ENCODE measurements at regions of chr1 and their contacts with region 1.

Region 1: GRCh38 chr1:37890378-37891014 is 31.1 kb upstream of the MTF1 start:
- DNase-seq: no peak
- ATAC-seq: peak; percentile 28
- H3K4me3 Mint-ChIP-seq: no peak overlapping the region
- H3K27ac Mint-ChIP-seq: peak overlapping the region; percentile 25
- H3K4me1 Mint-ChIP-seq: peaks cover 9% of the 10 kb centered on the region
- H3K27me3 Mint-ChIP-seq: no peaks in the 10 kb centered on the region
- CTCF ChIP-seq: no peak

Region 2: GRCh38 chr1:37721565-37721964 is 168.9 kb before region 1 on chr1:
- CTCF ChIA-PET with region 1: no interaction called
- POLR2A ChIA-PET with region 1: no interaction called
- intact Hi-C with region 1: no loop called
- DNase-seq: no peak
- ATAC-seq: no peak
- H3K4me3 Mint-ChIP-seq: no peak overlapping the region
- H3K27ac Mint-ChIP-seq: no peak overlapping the region
- H3K4me1 Mint-ChIP-seq: no peaks in the 10 kb centered on the region
- H3K27me3 Mint-ChIP-seq: peaks cover 3% of the 10 kb centered on the region
- CTCF ChIP-seq: no peak

Region 3: DNA sequence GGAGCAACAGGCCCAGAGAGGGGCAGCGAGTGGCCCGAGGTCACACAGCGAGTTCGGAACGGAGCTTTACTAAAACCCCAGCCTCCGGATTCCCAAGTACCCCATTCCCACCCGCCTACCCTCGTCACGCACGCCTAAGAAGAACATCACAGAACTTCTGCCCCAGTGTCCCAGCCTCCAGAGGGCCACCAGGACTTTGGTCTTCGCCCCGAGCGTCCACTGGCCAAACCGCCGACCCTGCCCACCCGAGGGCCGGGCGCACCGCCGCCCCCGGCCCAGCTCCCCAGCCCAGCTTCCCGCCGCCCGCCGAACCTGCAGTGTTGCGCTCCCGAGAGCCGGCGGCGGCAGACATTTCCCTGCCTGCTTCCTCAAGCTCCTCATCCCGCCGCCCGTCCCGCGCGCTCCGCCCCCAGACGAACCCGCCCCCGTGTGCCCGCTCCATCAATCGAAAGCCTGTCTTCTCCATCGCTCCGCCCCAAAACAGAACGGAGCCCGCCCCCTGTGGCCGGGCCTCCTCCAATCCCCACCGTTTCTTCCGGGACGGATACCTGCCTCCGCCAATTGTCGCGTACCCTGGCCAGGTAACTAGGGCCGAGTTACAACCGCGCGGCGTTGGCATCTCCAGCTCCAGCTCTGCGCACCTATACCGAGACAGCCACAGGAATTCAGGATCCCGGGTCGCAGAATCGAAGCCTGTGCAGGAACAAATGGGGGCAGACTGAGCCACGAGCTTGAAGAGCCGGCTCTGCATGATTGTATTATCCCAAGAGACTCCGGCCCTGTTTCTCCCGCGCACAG is 41.1 kb after region 1 on chr1:
- CTCF ChIA-PET with region 1: interaction called, 44 read pairs
- POLR2A ChIA-PET with region 1: interaction called, 4 read pairs
- intact Hi-C with region 1: loop called (anchors 1 kb)
- DNase-seq: peak; percentile 94
- ATAC-seq: peak; percentile 99
- H3K4me3 Mint-ChIP-seq: peak overlapping the region; percentile 99
- H3K27ac Mint-ChIP-seq: peak overlapping the region; percentile 87
- H3K4me1 Mint-ChIP-seq: peaks cover 48% of the 10 kb centered on the region
- H3K27me3 Mint-ChIP-seq: no peaks in the 10 kb centered on the region
- CTCF ChIP-seq: no peak

Region 4: DNA sequence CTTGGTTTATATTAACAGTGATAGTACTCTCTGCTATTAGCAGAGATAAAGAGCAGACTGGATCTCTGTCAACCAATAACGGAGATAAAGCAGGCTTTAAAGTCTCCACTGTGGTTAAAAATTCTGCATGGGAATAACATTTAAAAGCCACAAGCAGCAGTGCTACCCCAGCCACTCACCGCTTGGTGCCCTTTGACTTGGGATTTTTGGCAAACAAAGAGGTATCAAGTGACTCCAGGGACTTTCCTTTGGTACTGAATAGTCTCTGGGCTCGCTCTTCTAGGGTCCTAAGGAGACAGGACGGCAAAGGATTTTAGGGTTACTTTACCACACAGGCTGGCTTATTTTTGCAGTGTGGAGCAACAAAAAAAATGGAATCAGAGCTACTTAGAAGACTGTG is 88.0 kb after region 1 on chr1:
- CTCF ChIA-PET with region 1: interaction called, 4 read pairs
- POLR2A ChIA-PET with region 1: no interaction called
- intact Hi-C with region 1: loop called (anchors 1 kb)
- DNase-seq: no peak
- ATAC-seq: no peak
- H3K4me3 Mint-ChIP-seq: no peak overlapping the region
- H3K27ac Mint-ChIP-seq: no peak overlapping the region
- H3K4me1 Mint-ChIP-seq: peaks cover 2% of the 10 kb centered on the region
- H3K27me3 Mint-ChIP-seq: no peaks in the 10 kb centered on the region
- CTCF ChIP-seq: no peak

Region 5: GRCh38 chr1:38018864-38019343 is 128.4 kb after region 1 on chr1:
- CTCF ChIA-PET with region 1: no interaction called
- POLR2A ChIA-PET with region 1: no interaction called
- intact Hi-C with region 1: loop called (anchors 1 kb)
- DNase-seq: no peak
- ATAC-seq: peak; percentile 50
- H3K4me3 Mint-ChIP-seq: no peak overlapping the region
- H3K27ac Mint-ChIP-seq: no peak overlapping the region
- H3K4me1 Mint-ChIP-seq: peaks cover 4% of the 10 kb centered on the region
- H3K27me3 Mint-ChIP-seq: no peaks in the 10 kb centered on the region
- CTCF ChIP-seq: no peak

Region 6: DNA sequence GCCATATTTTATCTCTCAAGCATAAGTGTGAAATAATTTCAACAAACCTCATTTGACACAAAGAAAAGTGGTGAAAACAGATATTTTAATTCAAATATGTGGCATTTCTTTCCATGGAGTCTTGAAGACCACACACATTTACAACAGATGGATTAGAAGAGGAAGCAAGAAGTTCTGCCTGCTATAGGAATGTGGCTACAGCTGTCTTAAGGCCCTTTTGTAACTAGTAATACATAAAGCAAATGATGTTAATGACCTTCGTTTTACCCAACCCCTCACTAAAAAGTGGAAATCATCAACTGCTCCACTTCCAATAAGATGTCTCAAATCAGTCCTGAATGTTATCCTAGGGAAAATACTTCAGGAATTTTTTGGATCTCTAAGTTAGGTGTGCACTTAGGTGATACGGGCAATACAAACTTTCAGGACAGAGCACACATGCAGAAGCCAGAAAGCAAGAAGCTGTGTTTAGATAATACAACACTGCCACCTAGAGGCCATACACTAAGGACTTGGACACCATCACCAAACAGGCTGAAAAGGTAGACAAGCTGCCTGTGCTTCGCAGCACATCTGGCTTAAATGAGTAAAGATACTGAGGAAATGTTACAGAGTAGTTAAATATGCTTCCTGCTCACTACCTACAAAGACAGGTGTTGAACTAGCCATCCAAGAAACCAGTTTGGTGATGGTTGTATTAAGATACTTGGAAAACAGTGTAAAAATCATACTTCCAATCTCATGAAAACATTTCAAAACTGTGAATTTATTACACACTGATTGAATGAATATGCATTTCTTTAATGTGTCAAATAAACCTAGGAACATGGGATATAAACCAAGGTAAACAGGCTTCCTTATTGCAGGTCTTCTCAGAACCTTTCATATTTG is 944.7 kb after region 1 on chr1:
- CTCF ChIA-PET with region 1: no interaction called
- POLR2A ChIA-PET with region 1: no interaction called
- intact Hi-C with region 1: loop called (anchors 10 kb)
- DNase-seq: no peak
- ATAC-seq: peak; percentile 82
- H3K4me3 Mint-ChIP-seq: no peak overlapping the region
- H3K27ac Mint-ChIP-seq: no peak overlapping the region
- H3K4me1 Mint-ChIP-seq: peaks cover 7% of the 10 kb centered on the region
- H3K27me3 Mint-ChIP-seq: peaks cover 10% of the 10 kb centered on the region
- CTCF ChIP-seq: no peak

Measured in activated B cell treated with CpG ODN at 0.5 μM for 24 hours (primary cell).